ENCODE measurements at regions of chr10 and their contacts with region 1.

Region 1: GRCh38 chr10:123043409-123043925 is 34.7 kb downstream of the ACADSB start:
- DNase-seq: peak; percentile 61
- H3K4me3 ChIP-seq: no peak overlapping the region
- H3K27ac ChIP-seq: no peak overlapping the region
- H3K4me1 ChIP-seq: no peaks in the 10 kb centered on the region
- H3K27me3 ChIP-seq: no peaks in the 10 kb centered on the region
- CTCF ChIP-seq: peak; percentile 59 to 76
- POLR2A ChIP-seq: no peak

Region 2: DNA sequence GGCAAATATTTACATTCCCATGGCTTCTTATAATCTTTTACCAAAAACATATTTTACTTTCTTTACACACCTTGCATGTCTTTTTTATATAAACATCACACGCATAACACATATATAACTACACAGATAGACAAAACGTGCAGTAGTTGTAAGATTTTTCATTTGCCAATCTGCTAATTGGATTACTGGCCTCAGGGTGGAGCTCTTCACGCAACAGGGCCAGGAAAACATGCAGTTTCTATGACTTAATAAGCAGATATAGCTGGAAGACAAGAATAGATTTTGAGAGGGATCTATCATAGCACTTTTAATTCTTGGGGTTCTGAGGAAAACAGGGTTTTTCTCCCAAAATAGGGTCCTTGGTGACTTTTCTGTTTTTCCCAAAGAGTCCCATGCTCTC is 21.9 kb before region 1 on chr10:
- CTCF ChIA-PET with region 1: interaction called, 11 read pairs
- POLR2A ChIA-PET with region 1: no interaction called
- dilution Hi-C with region 1: no loop called
- intact Hi-C with region 1: no loop called
- DNase-seq: peak; percentile 20
- H3K4me3 ChIP-seq: no peak overlapping the region
- H3K27ac ChIP-seq: no peak overlapping the region
- H3K4me1 ChIP-seq: no peaks in the 10 kb centered on the region
- H3K27me3 ChIP-seq: no peaks in the 10 kb centered on the region
- CTCF ChIP-seq: peak; percentile 15 to 41
- POLR2A ChIP-seq: no peak

Region 3: DNA sequence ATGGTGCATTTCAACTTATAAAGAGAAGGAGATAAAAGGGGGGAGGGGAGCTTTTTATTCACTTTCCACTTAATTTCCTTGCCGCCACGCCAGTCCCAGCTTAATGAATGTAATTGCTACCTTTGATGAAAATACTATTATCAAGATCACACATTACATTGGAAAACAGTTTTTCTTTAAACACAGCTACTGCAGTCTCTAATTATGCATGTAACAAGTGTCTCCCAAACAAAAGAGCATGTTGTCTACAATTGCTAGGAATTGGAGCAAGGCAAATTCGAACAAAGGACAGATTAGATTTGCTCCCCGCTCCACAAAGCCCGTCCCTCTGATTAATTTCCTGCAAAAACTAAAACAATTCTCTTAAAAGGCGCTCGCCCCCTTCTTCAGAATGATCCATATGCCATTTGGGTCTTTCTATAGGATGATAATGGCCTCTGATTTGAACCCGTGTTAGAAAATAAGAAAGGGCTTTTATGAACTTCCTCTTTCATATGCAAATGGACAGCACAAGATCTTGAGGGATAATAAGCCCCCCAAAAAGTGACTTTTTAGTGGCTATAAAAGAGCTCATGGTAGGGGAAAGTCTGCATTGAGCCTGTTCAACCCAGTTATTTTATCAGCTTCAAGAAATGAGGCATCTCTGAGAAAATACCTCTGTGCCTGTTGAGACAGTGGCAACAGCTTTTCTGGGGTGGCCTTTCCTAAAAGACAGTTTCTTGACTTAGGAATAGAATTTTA is 25.9 kb after region 1 on chr10:
- CTCF ChIA-PET with region 1: no interaction called
- POLR2A ChIA-PET with region 1: no interaction called
- dilution Hi-C with region 1: no loop called
- intact Hi-C with region 1: loop called (anchors 1 kb)
- DNase-seq: no peak
- H3K4me3 ChIP-seq: no peak overlapping the region
- H3K27ac ChIP-seq: no peak overlapping the region
- H3K4me1 ChIP-seq: no peaks in the 10 kb centered on the region
- H3K27me3 ChIP-seq: no peaks in the 10 kb centered on the region
- CTCF ChIP-seq: no peak
- POLR2A ChIP-seq: no peak